ENCODE measurements at regions of chr11 and their contacts with region 1.

Region 1: DNA sequence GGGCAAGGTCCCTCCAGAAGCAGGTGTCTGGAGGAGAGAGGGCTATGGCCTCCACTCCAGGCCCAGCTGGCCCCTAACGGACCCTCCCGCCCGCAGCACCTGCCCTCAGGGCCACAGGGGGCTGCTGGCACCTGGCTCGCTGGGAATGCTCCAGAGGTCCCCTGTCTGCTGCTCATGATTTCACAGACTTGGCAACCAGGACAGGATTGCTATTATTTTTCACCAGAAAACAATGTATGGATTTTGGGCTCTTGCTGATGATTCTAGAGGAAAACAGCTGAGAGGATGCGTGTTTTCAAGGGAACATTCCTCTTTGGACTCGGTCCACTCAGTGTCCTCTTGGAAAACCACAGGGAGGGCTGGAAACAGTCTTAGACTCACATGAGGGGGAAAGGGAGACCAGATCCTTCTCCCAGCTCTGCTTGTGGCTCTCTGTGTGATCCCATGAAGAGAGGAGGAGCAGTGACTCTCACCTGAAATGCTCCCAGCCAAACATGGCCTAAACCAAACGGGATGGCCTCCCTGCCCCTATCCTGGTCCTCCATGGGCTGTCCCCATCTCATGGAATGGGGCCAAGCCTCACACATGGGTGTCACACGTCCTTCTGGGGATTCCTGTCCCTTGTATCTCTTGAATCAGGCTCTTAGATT is 15.8 kb downstream of the MYEOV start:
- DNase-seq: no peak
- ATAC-seq: no peak
- H3K4me3 ChIP-seq: no peak overlapping the region
- H3K27ac ChIP-seq: no peak overlapping the region
- H3K4me1 ChIP-seq: peaks cover 10 to 54% (median 28%) of the 10 kb centered on the region in 9 donors
- H3K27me3 ChIP-seq: no peaks in the 10 kb centered on the region
- CTCF ChIP-seq: no peak

Region 2: GRCh38 chr11:69376861-69377595 is 67.3 kb after region 1 on chr11:
- intact Hi-C with region 1: loop called in 1 of 10 experiments (anchors 5 kb)
- DNase-seq: no peak
- ATAC-seq: no peak
- H3K4me3 ChIP-seq: no peak overlapping the region
- H3K27ac ChIP-seq: no peak overlapping the region
- H3K4me1 ChIP-seq: peaks cover 0 to 12% (median 0%) of the 10 kb centered on the region in 9 donors
- H3K27me3 ChIP-seq: peaks cover 0 to 6% (median 0%) of the 10 kb centered on the region in 7 donors
- CTCF ChIP-seq: no peak